Colonic mucosa (tissue), 4 donors: ENCODE measurements at regions of chr12 and their contacts with region 1.

Region 1: DNA sequence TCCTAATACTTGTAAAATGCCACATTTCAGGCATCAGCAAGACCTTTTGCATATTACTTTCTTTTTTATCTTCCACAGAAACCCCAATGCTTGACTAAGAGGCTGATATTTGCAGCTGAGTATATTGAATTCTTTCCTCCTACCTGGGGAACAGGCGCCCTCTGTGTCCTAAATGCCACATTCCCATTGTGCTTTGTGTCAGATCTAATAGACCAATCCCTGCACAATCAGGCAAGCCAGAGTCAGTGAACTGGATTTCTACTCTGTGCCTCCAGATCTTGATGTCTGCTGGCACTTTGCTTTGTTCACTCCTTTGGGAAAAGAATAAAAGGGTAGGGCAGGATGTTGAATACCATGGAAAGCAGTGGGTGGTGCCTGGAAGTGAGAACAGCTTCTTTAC is 22.4 kb upstream of the TAS2R42 start:
- DNase-seq: no peak
- H3K4me3 ChIP-seq: no peak overlapping the region
- H3K27ac ChIP-seq: no peak overlapping the region
- H3K4me1 ChIP-seq: no peaks in the 10 kb centered on the region
- H3K27me3 ChIP-seq: no peaks in the 10 kb centered on the region
- CTCF ChIP-seq: no peak

Region 2: DNA sequence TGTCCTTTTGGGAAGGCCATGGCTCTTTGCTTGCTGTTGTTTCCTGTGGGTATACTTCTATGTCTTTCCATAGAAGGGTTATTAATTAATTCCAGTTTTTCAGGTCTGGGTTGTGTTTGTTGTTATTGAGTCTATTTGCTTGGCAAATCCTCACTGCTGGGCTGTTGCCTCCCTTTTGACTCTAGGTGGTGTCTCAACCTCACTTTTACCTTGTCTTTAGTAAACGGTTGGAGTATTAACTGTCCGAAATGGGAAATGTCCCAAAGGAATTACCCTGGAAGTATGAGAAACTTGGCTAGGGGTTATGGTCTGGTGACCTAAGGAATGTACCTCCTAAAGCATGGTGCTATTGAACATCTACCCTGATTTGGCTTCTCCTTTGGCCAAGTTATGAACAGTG is 341.7 kb before region 1 on chr12:
- intact Hi-C with region 1: loop called (anchors 10 kb)
- DNase-seq: no peak
- H3K4me3 ChIP-seq: no peak overlapping the region
- H3K27ac ChIP-seq: no peak overlapping the region
- H3K4me1 ChIP-seq: no peaks in the 10 kb centered on the region
- H3K27me3 ChIP-seq: no peaks in the 10 kb centered on the region
- CTCF ChIP-seq: no peak

Region 3: GRCh38 chr12:11040162-11040561 is 168.9 kb before region 1 on chr12:
- intact Hi-C with region 1: no loop called
- DNase-seq: no peak
- H3K4me3 ChIP-seq: no peak overlapping the region
- H3K27ac ChIP-seq: no peak overlapping the region
- H3K4me1 ChIP-seq: no peaks in the 10 kb centered on the region
- H3K27me3 ChIP-seq: no peaks in the 10 kb centered on the region
- CTCF ChIP-seq: no peak

Region 4: GRCh38 chr12:11836282-11837151 is 627.4 kb after region 1 on chr12:
- intact Hi-C with region 1: no loop called
- DNase-seq: no peak
- H3K4me3 ChIP-seq: no peak overlapping the region
- H3K27ac ChIP-seq: peak overlapping the region; percentile 27
- H3K4me1 ChIP-seq: peaks cover 30% of the 10 kb centered on the region
- H3K27me3 ChIP-seq: no peaks in the 10 kb centered on the region
- CTCF ChIP-seq: no peak